Activated CD8-positive, alpha-beta T cell treated with anti-CD3 and anti-CD28 coated beads for 36 hours (primary cell): ENCODE measurements at regions of chr7 and their contacts with region 1.

Region 1: DNA sequence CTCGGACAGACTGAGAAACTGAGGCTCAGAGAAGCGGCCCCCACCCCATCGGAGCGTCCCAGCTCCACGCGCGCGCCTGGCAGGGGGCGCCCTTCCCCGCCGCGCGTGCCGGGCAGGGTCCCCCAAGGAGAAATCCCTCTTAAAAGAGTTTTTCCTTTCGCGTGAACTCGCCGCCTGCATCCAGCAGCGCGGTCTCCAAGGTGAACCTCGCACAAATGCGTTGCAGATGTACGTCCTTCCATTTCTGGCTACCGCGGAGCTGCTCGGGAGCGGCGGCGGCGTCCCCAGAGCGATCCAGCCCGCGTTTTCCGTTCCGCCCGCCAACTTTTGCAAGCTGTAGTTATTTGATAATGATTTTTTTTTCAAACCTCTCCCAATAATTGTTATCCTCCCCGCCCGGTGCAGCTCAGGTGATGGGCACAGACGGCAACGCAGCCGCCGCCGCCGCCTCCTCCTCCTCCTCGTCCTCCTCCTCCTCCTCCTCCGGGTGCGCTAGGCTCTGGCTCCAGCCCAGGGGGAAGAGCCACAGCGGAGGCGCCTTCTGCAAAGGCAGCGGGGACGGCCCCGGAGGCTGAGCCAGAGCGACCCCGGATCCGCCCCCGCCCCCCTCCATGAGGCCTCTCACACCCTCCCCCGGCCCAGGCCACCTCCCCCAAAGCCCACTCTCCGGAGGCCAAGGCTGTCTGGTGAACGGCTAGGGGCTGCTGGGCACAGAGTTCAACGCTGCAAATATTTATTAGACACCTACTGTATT is 74.0 kb upstream of the CUX1 start:
- DNase-seq: peak; percentile 76
- ATAC-seq: peak; percentile 67
- H3K4me3 Mint-ChIP-seq: peak overlapping the region; percentile 62
- H3K27ac Mint-ChIP-seq: no peak overlapping the region
- H3K4me1 Mint-ChIP-seq: peaks cover 28% of the 10 kb centered on the region
- H3K27me3 Mint-ChIP-seq: no peaks in the 10 kb centered on the region
- CTCF ChIP-seq: peak; percentile 69

Region 2: GRCh38 chr7:101754424-101755159 is 11.2 kb after region 1 on chr7:
- CTCF ChIA-PET with region 1: interaction called, 11 read pairs
- POLR2A ChIA-PET with region 1: interaction called, 3 read pairs
- intact Hi-C with region 1: no loop called
- DNase-seq: no peak
- ATAC-seq: peak; percentile 65
- H3K4me3 Mint-ChIP-seq: peak overlapping the region; percentile 65
- H3K27ac Mint-ChIP-seq: peak overlapping the region; percentile 47
- H3K4me1 Mint-ChIP-seq: peaks cover 13% of the 10 kb centered on the region
- H3K27me3 Mint-ChIP-seq: no peaks in the 10 kb centered on the region
- CTCF ChIP-seq: no peak